CD8-positive, alpha-beta memory T cell (primary cell): ENCODE measurements at regions of chr3 and their contacts with region 1.

Region 1: GRCh38 chr3:123559040-123559861 is 25.6 kb downstream of the HACD2 start:
- DNase-seq: peak in 2 of 5 donors; percentile 41
- H3K4me3 ChIP-seq: no peak overlapping the region
- H3K4me3 Mint-ChIP-seq: no peak overlapping the region
- H3K27ac ChIP-seq: no peak overlapping the region
- H3K27ac Mint-ChIP-seq: no peak overlapping the region
- H3K4me1 ChIP-seq: no peaks in the 10 kb centered on the region
- H3K4me1 Mint-ChIP-seq: peaks cover 9 to 12% (median 12%) of the 10 kb centered on the region in 3 donors
- H3K27me3 ChIP-seq: no peaks in the 10 kb centered on the region
- H3K27me3 Mint-ChIP-seq: no peaks in the 10 kb centered on the region

Region 2: DNA sequence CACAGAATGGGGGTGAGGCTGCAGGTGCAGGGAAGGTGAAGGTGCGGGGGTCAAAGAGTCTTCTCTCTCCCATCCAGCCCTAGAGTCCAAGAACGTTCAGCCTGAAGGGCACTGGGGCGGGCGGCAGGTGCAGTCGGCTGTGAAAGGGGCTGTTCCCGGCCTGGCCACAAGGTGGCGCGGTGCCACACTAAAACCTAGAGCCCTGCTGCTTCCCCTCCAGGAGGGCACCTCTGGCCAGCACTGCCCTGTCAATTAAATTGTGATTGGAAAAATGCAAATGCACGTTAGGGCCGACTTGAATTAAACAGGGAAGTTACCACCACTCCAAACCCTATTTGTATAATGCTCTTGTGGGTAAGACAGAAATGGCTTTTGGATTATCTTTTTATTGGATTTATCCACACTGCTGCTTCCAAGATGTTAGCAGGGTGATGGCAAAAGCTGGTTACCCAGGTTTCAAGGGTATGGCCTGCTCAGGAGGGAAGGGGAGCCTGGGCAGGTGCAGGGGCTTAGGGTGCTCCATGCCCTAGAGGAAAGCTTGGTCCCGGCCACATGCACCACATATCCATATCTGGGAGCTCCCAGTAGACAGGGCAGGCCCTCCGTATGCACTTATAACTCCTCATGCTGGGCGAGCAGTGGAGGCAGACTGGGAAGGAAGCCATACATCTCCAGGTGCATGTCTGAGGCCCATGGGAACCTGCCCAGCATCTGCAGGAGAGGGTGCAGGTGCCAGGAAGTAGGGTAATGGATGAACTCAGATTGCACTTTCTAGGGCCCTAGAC is 230.2 kb before region 1 on chr3:
- CTCF ChIA-PET with region 1: interaction called, 81 read pairs
- POLR2A ChIA-PET with region 1: no interaction called
- DNase-seq: peak; percentile 52 to 74 (median 59)
- H3K4me3 ChIP-seq: no peak overlapping the region
- H3K4me3 Mint-ChIP-seq: no peak overlapping the region
- H3K27ac ChIP-seq: no peak overlapping the region
- H3K27ac Mint-ChIP-seq: no peak overlapping the region
- H3K4me1 ChIP-seq: no peaks in the 10 kb centered on the region
- H3K4me1 Mint-ChIP-seq: no peaks in the 10 kb centered on the region
- H3K27me3 ChIP-seq: no peaks in the 10 kb centered on the region
- H3K27me3 Mint-ChIP-seq: peaks cover 4 to 7% of the 10 kb centered on the region in 2 donors

Region 3: DNA sequence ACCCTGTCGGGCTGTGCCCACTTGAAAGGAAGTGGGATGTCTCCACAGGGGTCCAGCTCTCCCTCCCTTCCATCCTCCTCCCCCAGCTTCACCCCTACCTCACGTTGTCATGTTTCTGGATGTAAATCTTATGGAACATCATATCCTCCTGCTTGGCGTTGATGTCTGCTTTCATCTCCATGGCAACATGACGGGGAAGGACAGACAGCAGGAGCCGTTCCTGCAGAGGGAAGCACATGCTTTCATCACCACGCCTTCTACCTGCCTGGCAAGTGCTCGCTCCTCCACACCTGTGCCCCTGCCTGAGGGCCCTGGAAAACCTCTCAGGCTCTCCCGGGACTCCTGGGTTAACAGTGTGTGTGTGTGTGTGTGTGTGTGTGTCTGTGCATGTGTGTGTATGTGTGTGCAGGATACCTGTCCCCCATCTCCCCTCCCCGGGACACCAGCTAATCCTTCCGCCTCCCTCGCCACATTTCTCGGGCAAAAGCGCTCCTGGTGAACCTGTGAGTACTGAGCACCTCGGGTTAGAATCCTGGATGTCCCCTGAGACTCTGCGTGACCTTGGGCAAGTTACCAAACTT is 211.5 kb before region 1 on chr3:
- CTCF ChIA-PET with region 1: no interaction called
- POLR2A ChIA-PET with region 1: no interaction called
- DNase-seq: no peak
- H3K4me3 ChIP-seq: no peak overlapping the region
- H3K4me3 Mint-ChIP-seq: no peak overlapping the region
- H3K27ac ChIP-seq: no peak overlapping the region
- H3K27ac Mint-ChIP-seq: no peak overlapping the region
- H3K4me1 ChIP-seq: no peaks in the 10 kb centered on the region
- H3K4me1 Mint-ChIP-seq: peaks cover 0 to 5% (median 0%) of the 10 kb centered on the region in 3 donors
- H3K27me3 ChIP-seq: peaks cover 7% of the 10 kb centered on the region
- H3K27me3 Mint-ChIP-seq: peaks cover 9 to 33% of the 10 kb centered on the region in 2 donors

Region 4: DNA sequence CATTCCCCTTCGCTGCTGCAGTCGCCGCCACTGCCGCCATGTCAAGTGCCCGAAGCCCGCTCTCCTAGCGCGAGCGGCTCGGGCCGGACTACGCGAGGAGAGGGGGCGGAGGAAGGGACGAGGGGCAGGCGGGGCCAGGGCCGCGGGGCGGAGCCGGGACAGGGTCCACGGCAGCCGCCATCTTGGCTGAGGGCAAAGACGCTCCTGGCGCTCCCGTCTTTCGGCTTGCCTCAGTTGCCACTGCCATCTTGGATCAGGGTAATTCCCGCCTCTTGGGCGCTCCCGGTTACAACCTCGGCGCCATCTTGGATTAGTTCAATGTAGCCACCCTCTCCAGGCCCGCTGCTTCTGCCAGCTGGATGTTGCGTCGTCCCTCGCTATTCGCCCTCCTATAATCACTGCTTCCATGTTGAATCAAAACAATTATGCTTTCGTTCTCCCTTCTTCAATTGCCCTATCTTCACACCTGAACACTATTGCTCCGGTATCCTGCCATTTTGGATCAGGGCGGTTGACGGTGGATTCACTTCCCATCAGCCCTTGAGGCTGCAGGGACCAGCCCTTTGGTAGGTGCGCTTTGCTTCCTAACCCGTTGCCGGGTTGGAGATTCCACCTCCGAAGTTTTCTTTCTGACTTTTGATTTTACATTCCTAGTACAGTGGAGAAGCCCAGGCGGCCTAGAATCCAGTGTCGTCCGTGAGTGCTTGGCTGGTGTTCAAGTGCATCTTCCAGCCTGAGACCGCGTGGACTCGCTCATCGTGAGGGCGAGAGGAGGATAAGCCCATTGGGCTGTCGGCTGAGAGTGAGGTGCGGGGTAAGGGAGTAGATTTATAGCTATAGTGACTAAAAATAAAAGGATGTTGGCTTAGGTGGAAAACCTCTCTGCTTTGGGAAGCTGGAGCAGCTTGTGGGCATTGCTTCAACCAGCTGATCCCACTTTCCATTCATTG is 26.0 kb after region 1 on chr3 and contains the start of gene HACD2:
- CTCF ChIA-PET with region 1: interaction called, 12 read pairs
- POLR2A ChIA-PET with region 1: no interaction called
- DNase-seq: peak; percentile 91 to 94 (median 92)
- H3K4me3 ChIP-seq: peak within 1 kb of the TSS; percentile 100
- H3K4me3 Mint-ChIP-seq: peak within 1 kb of the TSS in 1 of 7 donors; percentile 89
- H3K27ac ChIP-seq: peak within 1 kb of the TSS; percentile 64
- H3K27ac Mint-ChIP-seq: peak within 1 kb of the TSS; percentile 57 to 91 (median 75)
- H3K4me1 ChIP-seq: peaks cover 18% of the 10 kb centered on the region
- H3K4me1 Mint-ChIP-seq: peaks cover 23 to 39% (median 30%) of the 10 kb centered on the region in 3 donors
- H3K27me3 ChIP-seq: no peaks in the 10 kb centered on the region
- H3K27me3 Mint-ChIP-seq: no peaks in the 10 kb centered on the region
- total RNA-seq, gene HACD2: 33.0 to 33.3 TPM

Region 5: GRCh38 chr3:124142389-124142970 is 583.2 kb after region 1 on chr3:
- CTCF ChIA-PET with region 1: no interaction called
- POLR2A ChIA-PET with region 1: no interaction called
- DNase-seq: no peak
- H3K4me3 ChIP-seq: no peak overlapping the region
- H3K4me3 Mint-ChIP-seq: no peak overlapping the region
- H3K27ac ChIP-seq: no peak overlapping the region
- H3K27ac Mint-ChIP-seq: no peak overlapping the region
- H3K4me1 ChIP-seq: no peaks in the 10 kb centered on the region
- H3K4me1 Mint-ChIP-seq: no peaks in the 10 kb centered on the region
- H3K27me3 ChIP-seq: no peaks in the 10 kb centered on the region
- H3K27me3 Mint-ChIP-seq: peaks cover 2 to 8% of the 10 kb centered on the region in 2 donors